A549 (cell line): ENCODE measurements at regions of chr7 and their contacts with region 1.

Region 1: DNA sequence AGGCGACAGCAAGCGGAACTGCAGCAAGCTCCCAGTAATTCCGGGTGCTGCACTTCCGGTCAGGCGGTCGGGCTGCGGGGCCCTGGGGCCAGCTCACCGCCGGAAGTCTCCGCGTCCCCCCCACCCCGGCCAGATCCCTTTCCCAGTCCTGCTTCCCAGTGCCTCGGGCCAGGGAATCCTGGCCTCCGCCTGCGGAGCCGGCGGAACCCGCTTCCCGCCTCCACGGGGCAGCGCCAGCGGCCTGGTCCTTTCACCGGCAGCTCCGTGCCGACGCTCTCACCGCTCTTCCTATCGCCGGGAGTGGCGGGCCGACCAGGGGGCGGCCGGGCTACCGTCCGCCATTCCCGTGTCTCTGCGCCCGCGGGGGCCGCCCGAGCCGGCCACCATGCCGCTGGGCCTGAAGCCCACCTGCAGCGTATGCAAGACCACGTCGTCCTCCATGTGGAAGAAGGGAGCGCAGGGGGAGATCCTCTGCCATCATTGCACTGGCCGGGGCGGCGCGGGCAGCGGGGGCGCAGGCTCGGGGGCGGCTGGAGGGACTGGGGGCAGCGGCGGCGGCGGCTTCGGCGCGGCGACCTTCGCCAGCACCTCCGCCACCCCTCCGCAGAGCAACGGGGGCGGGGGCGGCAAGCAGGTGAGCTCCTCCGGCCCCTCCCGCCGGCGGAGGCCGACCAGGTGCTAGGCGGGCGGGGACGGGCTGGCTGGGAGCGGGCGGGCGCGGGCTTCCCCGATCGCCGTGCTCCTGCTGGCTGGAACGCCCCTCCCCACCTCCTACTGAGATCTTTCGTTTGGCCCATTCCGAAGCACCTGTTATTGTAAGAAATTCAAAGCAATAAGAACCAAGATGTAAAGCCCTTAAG is at the start of gene GATAD1:
- DNase-seq: peak; percentile 92 to 94
- ATAC-seq: peak; percentile 97 to 98
- H3K4me3 ChIP-seq: peak within 1 kb of the TSS; percentile 89
- H3K27ac ChIP-seq: peak within 1 kb of the TSS; percentile 98 to 100
- H3K4me1 ChIP-seq: peaks cover 15% of the 10 kb centered on the region
- CTCF ChIP-seq: no peak
- EP300 ChIP-seq: no peak
- POLR2A ChIP-seq: peak; percentile 76
- RAD21 ChIP-seq: no peak; a peak in 1 of 5 replicates
- polyA plus RNA-seq, gene GATAD1: 35.7 and 38.5 TPM in 2 replicates

Region 2: GRCh38 chr7:92013611-92014010 is 434.0 kb before region 1 on chr7:
- CTCF ChIA-PET with region 1: no interaction called
- POLR2A ChIA-PET with region 1: no interaction called
- DNase-seq: no peak
- ATAC-seq: no peak
- H3K4me3 ChIP-seq: no peak overlapping the region
- H3K27ac ChIP-seq: no peak overlapping the region
- H3K4me1 ChIP-seq: no peaks in the 10 kb centered on the region
- CTCF ChIP-seq: no peak
- EP300 ChIP-seq: no peak
- POLR2A ChIP-seq: no peak
- RAD21 ChIP-seq: no peak

Region 3: DNA sequence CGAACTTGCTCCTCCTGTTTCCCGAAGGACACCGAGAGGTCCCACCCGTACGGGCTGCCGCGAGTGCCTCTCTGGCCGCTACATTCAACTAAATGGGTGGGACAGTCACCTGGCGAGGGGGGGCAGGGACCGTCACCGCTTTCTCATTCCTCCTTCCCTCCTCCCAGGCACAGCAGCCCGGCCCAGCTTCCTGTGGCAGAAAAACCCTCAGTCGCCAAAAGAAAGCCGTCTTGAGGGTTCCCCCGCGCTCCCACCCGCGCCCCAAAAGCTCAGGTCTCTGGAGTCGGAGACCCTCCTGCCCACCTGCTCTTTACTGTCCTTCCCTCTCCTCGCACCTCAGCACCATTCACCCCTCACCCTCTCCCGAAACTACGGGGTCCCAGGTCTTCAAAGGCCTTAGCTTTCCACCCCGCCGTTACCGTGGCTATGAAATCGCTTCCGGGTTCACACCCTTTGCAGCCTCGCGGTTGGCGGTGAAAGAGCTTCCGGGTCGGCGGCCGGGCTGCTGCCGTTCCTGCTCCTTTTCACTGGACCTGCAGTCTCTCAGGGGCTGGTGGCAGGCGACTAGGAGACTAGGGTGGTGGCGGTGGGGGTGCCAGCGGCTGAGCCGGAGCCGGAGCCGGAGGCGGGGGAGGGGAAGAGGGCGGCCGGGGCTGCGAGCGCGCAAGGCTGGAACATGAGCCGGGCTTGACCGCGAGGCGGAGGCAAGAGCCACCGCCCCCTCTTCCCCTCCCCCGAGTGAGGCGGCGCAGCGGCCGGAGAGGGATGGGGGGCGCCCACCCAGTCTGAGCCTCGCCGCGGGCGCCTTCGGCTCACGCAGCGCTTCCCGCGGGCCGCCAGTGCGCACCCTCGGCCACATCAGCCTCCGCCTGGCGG is 201.8 kb before region 1 on chr7 and contains the starts of genes ANKIB1 and KRIT1:
- CTCF ChIA-PET with region 1: interaction called, 13 read pairs
- POLR2A ChIA-PET with region 1: interaction called, 25 read pairs
- DNase-seq: peak; percentile 80 to 90
- ATAC-seq: peak; percentile 94 to 95
- H3K4me3 ChIP-seq: peak within 1 kb of the TSS; percentile 92
- H3K27ac ChIP-seq: peak within 1 kb of the TSS; percentile 88 to 96
- H3K4me1 ChIP-seq: peaks cover 21% of the 10 kb centered on the region
- CTCF ChIP-seq: no peak
- EP300 ChIP-seq: no peak
- POLR2A ChIP-seq: peak; percentile 50
- RAD21 ChIP-seq: no peak; a peak in 1 of 5 replicates
- polyA plus RNA-seq, gene ANKIB1: 51.5 and 59.5 TPM in 2 replicates
- polyA plus RNA-seq, gene KRIT1: 60.6 and 64.6 TPM in 2 replicates

Region 4: GRCh38 chr7:92421676-92422435 is 25.7 kb before region 1 on chr7:
- CTCF ChIA-PET with region 1: interaction called, 98 read pairs
- POLR2A ChIA-PET with region 1: interaction called, 10 read pairs
- DNase-seq: no peak
- ATAC-seq: no peak
- H3K4me3 ChIP-seq: no peak overlapping the region
- H3K27ac ChIP-seq: no peak overlapping the region
- H3K4me1 ChIP-seq: peaks cover 3% of the 10 kb centered on the region; the same call in 1 of the 3 replicates
- CTCF ChIP-seq: no peak
- EP300 ChIP-seq: no peak
- POLR2A ChIP-seq: no peak
- RAD21 ChIP-seq: no peak

Region 5: GRCh38 chr7:92461027-92462003 is 13.7 kb after region 1 on chr7:
- CTCF ChIA-PET with region 1: interaction called, 19 read pairs
- POLR2A ChIA-PET with region 1: interaction called, 4 read pairs
- DNase-seq: peak; percentile 61 to 66
- ATAC-seq: peak; percentile 90 to 93
- H3K4me3 ChIP-seq: no peak overlapping the region
- H3K27ac ChIP-seq: no peak overlapping the region
- H3K4me1 ChIP-seq: no peaks in the 10 kb centered on the region
- CTCF ChIP-seq: peak; percentile 80
- EP300 ChIP-seq: no peak
- POLR2A ChIP-seq: no peak
- RAD21 ChIP-seq: peak; percentile 61 to 65

Region 6: DNA sequence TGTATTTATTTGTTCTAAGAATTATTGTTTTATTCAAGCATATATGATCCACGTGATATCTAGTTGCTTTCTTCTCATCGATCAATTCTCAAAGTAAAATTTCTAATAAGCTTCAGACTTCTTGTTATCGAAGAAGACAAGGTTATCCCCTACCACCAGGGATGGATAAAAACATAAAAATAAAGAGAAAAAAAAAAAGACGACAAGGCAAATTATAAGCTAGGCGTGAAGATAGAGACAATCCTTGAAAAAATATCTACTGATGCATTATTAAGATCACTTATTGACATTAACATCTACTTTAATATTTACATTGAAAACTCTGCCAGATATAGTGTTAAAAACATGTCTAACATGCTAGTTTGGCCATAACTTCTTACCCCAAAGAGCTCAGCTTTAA is 61.4 kb after region 1 on chr7:
- CTCF ChIA-PET with region 1: no interaction called
- POLR2A ChIA-PET with region 1: no interaction called
- DNase-seq: no peak
- ATAC-seq: no peak
- H3K4me3 ChIP-seq: no peak overlapping the region
- H3K27ac ChIP-seq: no peak overlapping the region
- H3K4me1 ChIP-seq: no peaks in the 10 kb centered on the region
- CTCF ChIP-seq: no peak
- EP300 ChIP-seq: no peak
- POLR2A ChIP-seq: no peak
- RAD21 ChIP-seq: no peak